PC-3 (cell line): ENCODE measurements at regions of chr7 and their contacts with region 1.

Region 1: DNA sequence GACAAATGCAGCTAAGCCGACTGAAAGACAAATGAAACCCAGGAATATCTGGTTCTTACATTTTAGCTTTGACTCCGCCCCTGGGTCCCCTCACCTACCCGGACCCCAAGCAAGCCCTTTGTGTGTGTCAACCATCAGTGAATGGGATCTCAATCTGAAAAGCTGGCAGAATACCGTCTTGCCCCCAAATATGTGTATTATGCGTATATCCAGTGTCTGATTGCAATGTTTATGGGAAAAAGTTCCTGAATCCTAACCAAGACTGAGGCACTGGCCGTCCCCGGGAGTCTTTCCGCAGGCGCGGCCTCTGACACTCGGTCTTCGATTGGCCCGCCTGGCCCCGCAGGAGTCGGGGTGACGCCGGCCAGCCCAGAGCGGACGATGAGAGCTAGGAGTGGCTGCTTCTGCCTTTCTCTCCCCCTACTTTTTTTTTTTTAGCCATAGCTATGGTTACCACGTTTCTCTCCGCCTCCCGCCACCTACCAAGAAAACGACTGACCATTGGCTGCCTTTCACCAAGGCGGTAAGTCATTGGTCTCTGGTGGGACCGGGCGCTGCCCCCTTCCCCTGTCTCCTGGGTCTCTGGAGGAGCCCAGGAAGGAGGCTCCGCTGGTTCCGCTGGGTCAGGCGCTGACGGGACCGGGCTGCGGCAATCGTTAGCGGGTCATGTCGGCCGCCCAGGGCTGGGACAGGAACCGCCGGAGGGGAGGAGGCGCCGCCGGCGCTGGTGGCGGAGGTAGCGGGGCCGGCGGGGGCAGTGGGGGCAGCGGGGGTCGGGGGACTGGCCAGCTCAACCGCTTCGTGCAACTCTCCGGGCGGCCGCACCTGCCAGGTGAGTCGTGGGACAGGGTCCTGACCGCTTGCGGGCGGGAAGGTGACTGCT is at the start of gene KLHDC10:
- DNase-seq: peak; percentile 98
- ATAC-seq: peak; percentile 87
- H3K4me3 ChIP-seq: peak within 1 kb of the TSS; percentile 89
- H3K27ac ChIP-seq: peak within 1 kb of the TSS; percentile 33
- H3K4me1 ChIP-seq: peaks cover 16% of the 10 kb centered on the region
- H3K27me3 ChIP-seq: no peaks in the 10 kb centered on the region
- CTCF ChIP-seq: no peak
- total RNA-seq, gene KLHDC10: 13.2 and 21.6 TPM in 2 replicates

Region 2: DNA sequence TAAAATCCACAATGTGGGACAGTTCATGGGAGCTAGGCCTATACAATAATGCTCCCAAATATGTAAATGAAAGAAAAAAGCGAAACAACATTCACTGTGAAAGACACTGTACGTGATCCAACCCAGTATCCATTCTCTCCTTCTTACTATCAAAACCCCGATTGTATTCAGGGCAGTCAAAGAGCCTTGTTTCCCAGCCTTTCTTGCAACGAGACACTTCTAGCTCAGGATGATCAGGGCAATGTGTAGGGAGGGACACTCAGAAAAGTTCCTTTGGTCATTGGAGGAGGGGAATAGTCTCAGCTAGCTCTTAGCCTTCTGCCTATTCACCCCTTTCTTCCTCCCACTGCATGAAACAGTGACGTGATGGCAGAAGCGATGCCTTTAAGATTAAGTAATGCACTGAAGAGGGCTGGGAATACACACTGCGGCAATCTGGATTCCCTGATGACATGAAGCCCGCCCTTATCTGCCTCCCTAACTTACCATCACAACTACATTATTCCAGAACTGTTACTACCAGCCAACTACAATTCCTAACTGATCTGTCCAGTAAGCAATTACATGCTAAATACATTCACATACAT is 144.7 kb before region 1 on chr7:
- CTCF ChIA-PET with region 1: no interaction called
- POLR2A ChIA-PET with region 1: no interaction called
- intact Hi-C with region 1: no loop called
- DNase-seq: no peak
- ATAC-seq: no peak
- H3K4me3 ChIP-seq: no peak overlapping the region
- H3K27ac ChIP-seq: no peak overlapping the region
- H3K4me1 ChIP-seq: peaks cover 14% of the 10 kb centered on the region
- H3K27me3 ChIP-seq: no peaks in the 10 kb centered on the region
- CTCF ChIP-seq: no peak

Region 3: DNA sequence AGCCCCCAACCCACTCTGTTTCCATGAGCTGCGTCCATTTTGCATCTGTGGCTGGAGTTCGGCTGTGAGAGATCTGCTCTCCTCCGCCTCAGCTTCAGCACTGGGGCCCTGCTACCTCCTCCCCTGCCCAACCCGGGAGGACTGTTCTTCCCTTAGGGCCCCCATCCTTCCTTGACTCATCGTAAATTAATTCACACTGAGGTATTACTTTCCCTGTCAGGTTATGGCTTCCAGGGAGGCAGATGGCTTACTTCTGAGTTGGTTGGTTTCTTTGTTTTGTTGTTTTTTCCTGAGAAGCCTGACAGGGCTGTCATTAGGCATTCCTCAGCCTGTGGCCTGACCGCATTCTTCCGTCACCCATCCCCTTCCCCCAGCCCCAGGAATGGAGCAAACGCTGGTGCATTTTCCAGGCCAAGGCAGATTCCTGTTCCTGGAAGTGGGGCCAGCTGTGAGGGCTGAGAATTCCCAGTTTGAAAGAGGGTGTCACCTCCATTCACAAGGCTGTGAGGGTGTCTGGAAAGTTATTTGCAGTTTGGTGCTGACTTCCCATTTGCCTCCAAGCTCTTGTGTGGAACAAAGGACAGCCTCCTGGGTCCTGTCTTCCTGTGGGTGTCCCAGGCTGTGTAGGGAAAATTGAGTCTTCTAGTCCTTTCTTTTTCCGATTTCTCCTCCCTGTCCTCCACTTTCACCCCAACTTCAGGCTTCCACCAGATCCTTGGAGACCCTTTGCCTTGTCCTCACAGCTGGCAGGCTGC is 286.1 kb after region 1 on chr7:
- CTCF ChIA-PET with region 1: no interaction called
- POLR2A ChIA-PET with region 1: no interaction called
- intact Hi-C with region 1: loop called (anchors 5 kb)
- DNase-seq: peak; percentile 97
- ATAC-seq: peak; percentile 89
- H3K4me3 ChIP-seq: peak overlapping the region; percentile 38; the same call in 1 of the 2 replicates
- H3K27ac ChIP-seq: peak overlapping the region; percentile 92
- H3K4me1 ChIP-seq: peaks cover 37% of the 10 kb centered on the region
- H3K27me3 ChIP-seq: no peaks in the 10 kb centered on the region
- CTCF ChIP-seq: no peak

Region 4: GRCh38 chr7:130721486-130722280 is 651.5 kb after region 1 on chr7:
- CTCF ChIA-PET with region 1: no interaction called
- POLR2A ChIA-PET with region 1: no interaction called
- intact Hi-C with region 1: loop called (anchors 1 kb)
- DNase-seq: peak; percentile 69
- ATAC-seq: peak; percentile 99
- H3K4me3 ChIP-seq: no peak overlapping the region
- H3K27ac ChIP-seq: no peak overlapping the region
- H3K4me1 ChIP-seq: no peaks in the 10 kb centered on the region
- H3K27me3 ChIP-seq: peaks cover 17% of the 10 kb centered on the region
- CTCF ChIP-seq: peak; percentile 69

Region 5: GRCh38 chr7:130758429-130759056 is 688.3 kb after region 1 on chr7:
- CTCF ChIA-PET with region 1: interaction called, 6 read pairs
- POLR2A ChIA-PET with region 1: no interaction called
- intact Hi-C with region 1: loop called (anchors 2 kb)
- DNase-seq: peak; percentile 67
- ATAC-seq: peak; percentile 70
- H3K4me3 ChIP-seq: no peak overlapping the region
- H3K27ac ChIP-seq: no peak overlapping the region
- H3K4me1 ChIP-seq: no peaks in the 10 kb centered on the region
- H3K27me3 ChIP-seq: peaks cover under 1% of the 10 kb centered on the region; the same call in 1 of the 2 replicates
- CTCF ChIP-seq: peak; percentile 83